ENCODE measurements at regions of chr16 and their contacts with region 1.

Region 1: GRCh38 chr16:788394-789126 is at the start of gene CHTF18:
- DNase-seq: peak; percentile 87
- H3K4me3 Mint-ChIP-seq: peak within 1 kb of the TSS; percentile 77
- H3K27ac Mint-ChIP-seq: no peak within 1 kb of the TSS
- H3K4me1 Mint-ChIP-seq: peaks cover under 1% of the 10 kb centered on the region
- H3K27me3 Mint-ChIP-seq: no peaks in the 10 kb centered on the region
- CTCF ChIP-seq: no peak
- total RNA-seq, gene CHTF18: 22.7 and 30.9 TPM in 2 replicates

Region 2: GRCh38 chr16:705748-706188 is 82.8 kb before region 1 on chr16 and contains the start of gene FBXL16:
- CTCF ChIA-PET with region 1: interaction called, 21 read pairs
- POLR2A ChIA-PET with region 1: interaction called, 4 read pairs
- intact Hi-C with region 1: no loop called
- DNase-seq: peak; percentile 63
- H3K4me3 Mint-ChIP-seq: peak within 1 kb of the TSS; percentile 83
- H3K27ac Mint-ChIP-seq: peak within 1 kb of the TSS; percentile 67
- H3K4me1 Mint-ChIP-seq: peaks cover 17% of the 10 kb centered on the region
- H3K27me3 Mint-ChIP-seq: no peaks in the 10 kb centered on the region
- CTCF ChIP-seq: no peak
- total RNA-seq, gene FBXL16: 40.5 and 48.2 TPM in 2 replicates

Region 3: DNA sequence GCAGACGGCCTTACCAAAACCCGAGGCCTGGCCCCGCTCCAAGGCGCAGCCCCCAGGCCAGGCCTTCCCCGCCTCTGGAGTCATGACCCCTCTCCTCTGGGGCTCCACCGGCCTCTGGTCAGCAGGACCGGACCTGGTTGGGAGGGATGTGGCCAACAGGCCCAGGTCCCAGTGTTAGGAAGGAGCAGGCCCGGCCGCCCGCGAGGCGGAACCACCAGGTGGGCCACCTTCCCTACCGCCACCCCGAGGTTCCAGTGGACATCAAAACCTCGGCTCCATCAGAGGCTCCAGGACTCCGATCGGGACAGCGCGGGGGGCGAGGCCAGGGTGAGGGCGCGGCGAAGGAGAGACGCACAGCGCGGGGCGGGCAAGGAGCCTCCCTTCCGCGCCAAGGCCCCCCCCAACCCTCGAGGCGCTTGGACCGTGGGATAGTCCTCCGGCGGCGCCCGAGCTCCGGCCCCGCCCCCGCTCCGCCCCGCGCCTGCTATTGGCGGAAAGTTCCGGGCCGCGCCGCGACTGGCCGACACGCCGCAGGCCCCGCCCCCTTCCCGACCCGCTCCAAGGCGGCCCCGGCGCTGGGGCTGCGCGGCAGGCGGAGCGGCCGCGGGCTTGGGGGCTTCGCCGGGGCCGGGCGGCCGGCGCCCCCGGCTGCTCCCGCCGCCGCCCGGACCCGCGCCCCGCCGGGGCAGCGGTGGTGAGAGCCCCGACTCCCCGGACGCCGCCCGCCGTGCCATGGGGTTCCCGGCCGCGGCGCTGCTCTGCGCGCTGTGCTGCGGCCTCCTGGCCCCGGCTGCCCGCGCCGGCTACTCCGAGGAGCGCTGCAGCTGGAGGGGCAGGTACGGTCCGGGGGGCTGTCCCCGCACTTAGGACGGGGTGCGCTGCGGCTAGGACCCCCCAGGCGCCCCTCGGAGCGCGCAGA is 73.7 kb before region 1 on chr16 and contains the start of gene METRN:
- CTCF ChIA-PET with region 1: interaction called, 21 read pairs
- POLR2A ChIA-PET with region 1: interaction called, 14 read pairs
- intact Hi-C with region 1: loop called (anchors 1 kb)
- DNase-seq: peak; percentile 83
- H3K4me3 Mint-ChIP-seq: peak within 1 kb of the TSS; percentile 76
- H3K27ac Mint-ChIP-seq: peak within 1 kb of the TSS; percentile 16
- H3K4me1 Mint-ChIP-seq: peaks cover 21% of the 10 kb centered on the region
- H3K27me3 Mint-ChIP-seq: no peaks in the 10 kb centered on the region
- CTCF ChIP-seq: no peak
- total RNA-seq, gene METRN: 56.3 and 69.5 TPM in 2 replicates

Region 4: DNA sequence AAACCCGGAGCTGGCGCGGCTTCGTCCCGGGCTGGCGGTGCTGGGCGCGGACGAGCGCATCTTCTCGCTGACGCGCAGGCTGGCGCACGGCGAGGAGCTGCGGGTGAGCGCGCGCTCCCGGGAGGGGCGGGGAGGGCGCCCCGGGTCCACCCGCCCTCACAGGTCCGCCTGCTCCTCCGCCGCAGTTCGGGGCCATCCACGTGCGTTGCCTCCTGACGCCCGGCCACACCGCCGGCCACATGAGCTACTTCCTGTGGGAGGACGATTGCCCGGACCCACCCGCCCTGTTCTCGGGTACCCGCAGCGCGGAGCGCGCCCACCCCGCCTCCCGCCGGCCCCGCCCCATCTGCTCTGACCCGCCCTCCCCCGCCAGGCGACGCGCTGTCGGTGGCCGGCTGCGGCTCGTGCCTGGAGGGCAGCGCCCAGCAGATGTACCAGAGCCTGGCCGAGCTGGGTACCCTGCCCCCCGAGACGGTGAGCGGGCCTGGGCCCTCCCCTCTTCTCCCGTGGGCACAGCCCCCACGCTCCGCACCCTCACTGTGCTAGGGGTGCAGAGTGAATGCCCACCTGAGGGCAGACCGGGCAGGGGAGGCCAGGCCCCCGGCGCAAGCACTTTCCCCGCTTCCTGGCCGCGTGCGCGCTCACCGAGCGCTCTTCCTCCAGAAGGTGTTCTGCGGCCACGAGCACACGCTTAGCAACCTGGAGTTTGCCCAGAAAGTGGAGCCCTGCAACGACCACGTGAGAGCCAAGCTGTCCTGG is 60.2 kb before region 1 on chr16:
- CTCF ChIA-PET with region 1: interaction called, 7 read pairs
- POLR2A ChIA-PET with region 1: interaction called, 15 read pairs
- intact Hi-C with region 1: loop called (anchors 5 kb)
- DNase-seq: peak; percentile 82
- H3K4me3 Mint-ChIP-seq: peak overlapping the region; percentile 65
- H3K27ac Mint-ChIP-seq: no peak overlapping the region
- H3K4me1 Mint-ChIP-seq: no peaks in the 10 kb centered on the region
- H3K27me3 Mint-ChIP-seq: no peaks in the 10 kb centered on the region
- CTCF ChIP-seq: no peak

Region 5: DNA sequence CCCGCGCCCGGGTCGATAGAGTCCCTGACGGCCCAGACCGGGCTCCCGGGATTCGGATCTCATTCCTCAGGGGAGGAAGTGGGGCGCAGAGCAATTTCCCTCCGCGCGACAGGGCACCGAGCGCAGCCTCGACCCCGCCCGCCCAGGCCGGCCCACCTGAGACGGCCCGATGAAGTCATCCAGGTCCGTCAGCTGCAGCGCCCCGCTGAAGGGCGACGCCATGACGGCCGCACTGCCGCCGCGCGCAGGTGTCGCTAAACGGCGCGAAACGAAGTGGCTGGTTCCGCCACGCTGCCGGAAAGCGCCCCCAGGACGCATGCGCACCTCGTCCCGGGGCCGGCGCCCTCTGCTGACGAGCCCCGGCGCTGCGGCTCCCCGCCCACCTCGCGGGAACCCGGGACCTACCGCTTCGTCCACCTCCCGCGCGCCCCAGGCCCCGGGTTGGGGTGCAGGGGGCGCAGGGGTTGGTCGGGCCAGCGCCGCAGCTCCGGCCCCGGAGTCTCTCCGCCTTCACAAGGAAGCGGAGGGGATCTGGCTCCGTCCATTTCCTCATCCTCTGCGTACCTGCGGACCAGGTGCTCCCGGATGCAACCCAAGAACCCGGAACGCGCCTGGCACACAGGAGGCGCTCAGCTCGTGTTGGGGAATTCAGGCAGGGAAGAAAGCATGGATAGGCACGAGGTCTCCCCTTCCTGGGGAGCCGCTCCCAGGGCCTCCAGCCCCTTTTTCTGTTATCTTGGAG is 47.6 kb before region 1 on chr16 and contains the start of gene CIAO3:
- CTCF ChIA-PET with region 1: interaction called, 37 read pairs
- POLR2A ChIA-PET with region 1: interaction called, 22 read pairs
- intact Hi-C with region 1: loop called (anchors 1 kb)
- DNase-seq: peak; percentile 88
- H3K4me3 Mint-ChIP-seq: peak within 1 kb of the TSS; percentile 74
- H3K27ac Mint-ChIP-seq: peak within 1 kb of the TSS; percentile 84
- H3K4me1 Mint-ChIP-seq: peaks cover 6% of the 10 kb centered on the region
- H3K27me3 Mint-ChIP-seq: no peaks in the 10 kb centered on the region
- CTCF ChIP-seq: peak; percentile 96
- total RNA-seq, gene CIAO3: 28.5 and 31.1 TPM in 2 replicates

Region 6: DNA sequence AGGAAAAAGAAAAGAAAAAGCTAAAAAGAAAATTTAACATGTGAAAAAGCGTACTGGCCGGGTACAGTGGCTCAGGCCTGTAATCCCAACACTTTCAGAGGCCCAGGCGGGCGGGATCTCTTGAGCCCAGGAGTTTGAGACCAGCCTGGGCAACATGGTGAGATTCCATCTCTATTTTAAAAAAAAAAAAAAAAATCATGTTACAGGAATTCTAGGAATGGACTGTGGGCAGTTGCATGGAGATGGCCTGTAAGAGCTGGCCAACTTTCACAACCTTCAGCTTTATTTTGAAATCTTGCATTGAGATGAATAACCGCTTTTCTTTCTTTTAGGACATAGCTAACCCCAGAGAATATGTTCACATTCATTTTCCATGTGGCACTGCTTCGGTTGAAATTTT is 39.6 kb before region 1 on chr16:
- CTCF ChIA-PET with region 1: interaction called, 32 read pairs
- POLR2A ChIA-PET with region 1: interaction called, 6 read pairs
- intact Hi-C with region 1: loop called (anchors 1 kb)
- DNase-seq: peak; percentile 56
- H3K4me3 Mint-ChIP-seq: no peak overlapping the region
- H3K27ac Mint-ChIP-seq: no peak overlapping the region
- H3K4me1 Mint-ChIP-seq: no peaks in the 10 kb centered on the region
- H3K27me3 Mint-ChIP-seq: no peaks in the 10 kb centered on the region
- CTCF ChIP-seq: no peak

Region 7: GRCh38 chr16:760545-761343 is 27.8 kb before region 1 on chr16 and contains the start of gene MSLN:
- CTCF ChIA-PET with region 1: interaction called, 11 read pairs
- POLR2A ChIA-PET with region 1: interaction called, 6 read pairs
- intact Hi-C with region 1: no loop called
- DNase-seq: peak; percentile 76
- H3K4me3 Mint-ChIP-seq: peak within 1 kb of the TSS; percentile 60
- H3K27ac Mint-ChIP-seq: peak within 1 kb of the TSS; percentile 61
- H3K4me1 Mint-ChIP-seq: peaks cover 10% of the 10 kb centered on the region
- H3K27me3 Mint-ChIP-seq: no peaks in the 10 kb centered on the region
- CTCF ChIP-seq: no peak
- total RNA-seq, gene MSLN: 18.1 and 25.2 TPM in 2 replicates

Region 8: DNA sequence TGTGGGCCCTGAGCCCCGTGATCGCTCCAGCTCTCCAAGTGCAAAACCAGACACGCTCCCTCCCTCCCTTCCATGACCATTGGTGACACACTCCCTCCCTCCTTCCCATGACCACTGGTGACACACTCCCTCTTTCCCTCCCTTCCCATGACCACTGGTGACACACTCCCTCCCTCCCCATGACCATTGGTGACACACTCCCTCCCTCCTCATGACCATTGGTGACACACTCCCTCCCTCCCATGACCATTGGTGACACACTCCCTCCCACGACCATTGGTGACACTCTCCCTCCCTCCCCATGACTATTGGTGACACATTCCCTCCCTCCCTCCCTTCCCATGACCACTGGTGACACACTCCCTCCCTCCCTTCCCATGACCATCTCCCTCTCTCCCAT is 125.9 kb after region 1 on chr16:
- CTCF ChIA-PET with region 1: no interaction called
- POLR2A ChIA-PET with region 1: no interaction called
- intact Hi-C with region 1: no loop called
- DNase-seq: peak; percentile 0
- H3K4me3 Mint-ChIP-seq: no peak overlapping the region
- H3K27ac Mint-ChIP-seq: no peak overlapping the region
- H3K4me1 Mint-ChIP-seq: no peaks in the 10 kb centered on the region
- H3K27me3 Mint-ChIP-seq: no peaks in the 10 kb centered on the region
- CTCF ChIP-seq: no peak

Measured in MCF 10A (cell line).